Naive thymus-derived CD4-positive, alpha-beta T cell (primary cell): ENCODE measurements at regions of chr5 and their contacts with region 1.

Region 1: GRCh38 chr5:79612667-79613198 is 492 bp downstream of the TENT2 start:
- DNase-seq: no peak
- ATAC-seq: no peak
- H3K4me3 ChIP-seq: peak overlapping the region; percentile 84
- H3K4me3 Mint-ChIP-seq: peak overlapping the region; percentile 95 to 100 (median 97)
- H3K27ac ChIP-seq: peak overlapping the region; percentile 90
- H3K27ac Mint-ChIP-seq: peak overlapping the region; percentile 91 to 99 (median 98)
- H3K4me1 ChIP-seq: peaks cover 14 to 18% of the 10 kb centered on the region in 2 donors
- H3K4me1 Mint-ChIP-seq: peaks cover 25 to 58% (median 44%) of the 10 kb centered on the region in 7 donors
- H3K27me3 ChIP-seq: no peaks in the 10 kb centered on the region
- H3K27me3 Mint-ChIP-seq: peaks cover 0 to 6% (median 2%) of the 10 kb centered on the region in 5 donors

Region 2: DNA sequence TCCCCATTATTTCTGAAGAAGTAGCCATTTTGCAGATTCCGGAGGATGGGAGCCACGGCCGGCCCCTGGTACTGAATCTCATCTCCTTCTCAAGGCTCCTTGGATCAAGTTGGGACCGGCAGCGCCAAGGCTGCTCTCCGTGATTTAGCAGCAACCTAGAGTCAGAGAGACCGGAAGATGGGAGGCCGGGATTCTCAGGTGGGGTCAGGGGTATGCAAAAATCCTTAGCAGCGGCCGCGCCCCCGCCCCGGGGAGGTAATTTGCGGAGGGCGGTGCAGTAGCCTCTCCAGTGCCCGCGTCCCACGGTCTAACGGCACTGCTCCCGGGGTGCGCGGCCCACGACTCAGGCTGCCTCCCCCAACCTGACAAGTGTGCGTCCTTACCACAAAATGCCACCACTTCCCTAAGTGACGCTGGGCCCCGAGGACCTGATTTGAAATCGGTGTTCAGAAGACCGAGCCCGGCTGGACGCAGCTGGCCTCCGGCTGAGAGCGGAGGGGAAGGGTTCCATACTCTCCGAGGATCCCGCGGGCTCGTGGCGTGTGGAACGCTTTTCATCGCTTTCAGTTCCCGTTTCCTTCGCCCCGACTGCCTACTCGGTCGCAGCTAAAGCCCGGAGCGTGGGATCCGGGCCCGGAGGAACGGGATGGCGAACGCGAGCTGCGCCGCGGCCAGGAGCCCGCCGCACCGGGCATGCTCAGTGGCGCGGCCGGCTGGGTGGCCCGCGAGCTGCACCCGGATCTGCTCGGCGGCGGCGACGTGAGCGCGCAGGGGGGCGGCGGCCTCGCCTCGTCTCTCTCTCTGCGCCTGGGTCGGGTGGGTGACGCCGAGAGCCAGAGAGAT is 1252.7 kb before region 1 on chr5 and contains the start of gene SCAMP1:
- CTCF ChIA-PET with region 1: no interaction called
- POLR2A ChIA-PET with region 1: no interaction called
- intact Hi-C with region 1: loop called in 1 of 2 experiments (anchors 5 kb)
- DNase-seq: peak; percentile 84 to 96 (median 93)
- ATAC-seq: peak; percentile 92
- H3K4me3 ChIP-seq: peak within 1 kb of the TSS; percentile 99
- H3K4me3 Mint-ChIP-seq: peak within 1 kb of the TSS; percentile 89 to 97 (median 94)
- H3K27ac ChIP-seq: peak within 1 kb of the TSS; percentile 85
- H3K27ac Mint-ChIP-seq: peak within 1 kb of the TSS; percentile 71 to 97 (median 96)
- H3K4me1 ChIP-seq: peaks cover 11 to 16% of the 10 kb centered on the region in 2 donors
- H3K4me1 Mint-ChIP-seq: peaks cover 27 to 64% (median 55%) of the 10 kb centered on the region in 7 donors
- H3K27me3 ChIP-seq: no peaks in the 10 kb centered on the region
- H3K27me3 Mint-ChIP-seq: no peaks in the 10 kb centered on the region
- total RNA-seq, gene SCAMP1: 16.9 to 27.6 (median 23.0) TPM

Region 3: GRCh38 chr5:79560771-79561524 is 51.8 kb before region 1 on chr5:
- CTCF ChIA-PET with region 1: interaction called, 3 read pairs
- POLR2A ChIA-PET with region 1: no interaction called
- intact Hi-C with region 1: loop called in 1 of 2 experiments (anchors 1 kb)
- DNase-seq: peak in 1 of 9 donors; percentile 25
- ATAC-seq: no peak
- H3K4me3 ChIP-seq: no peak overlapping the region
- H3K4me3 Mint-ChIP-seq: peak overlapping the region in 1 of 10 donors; percentile 53
- H3K27ac ChIP-seq: no peak overlapping the region
- H3K27ac Mint-ChIP-seq: peak overlapping the region in 1 of 9 donors; percentile 93
- H3K4me1 ChIP-seq: no peaks in the 10 kb centered on the region
- H3K4me1 Mint-ChIP-seq: peaks cover 0 to 43% (median 4%) of the 10 kb centered on the region in 7 donors
- H3K27me3 ChIP-seq: no peaks in the 10 kb centered on the region
- H3K27me3 Mint-ChIP-seq: peaks cover 0 to 5% (median 0%) of the 10 kb centered on the region in 5 donors